ENCODE measurements at regions of chr11 and their contacts with region 1.

Region 1: DNA sequence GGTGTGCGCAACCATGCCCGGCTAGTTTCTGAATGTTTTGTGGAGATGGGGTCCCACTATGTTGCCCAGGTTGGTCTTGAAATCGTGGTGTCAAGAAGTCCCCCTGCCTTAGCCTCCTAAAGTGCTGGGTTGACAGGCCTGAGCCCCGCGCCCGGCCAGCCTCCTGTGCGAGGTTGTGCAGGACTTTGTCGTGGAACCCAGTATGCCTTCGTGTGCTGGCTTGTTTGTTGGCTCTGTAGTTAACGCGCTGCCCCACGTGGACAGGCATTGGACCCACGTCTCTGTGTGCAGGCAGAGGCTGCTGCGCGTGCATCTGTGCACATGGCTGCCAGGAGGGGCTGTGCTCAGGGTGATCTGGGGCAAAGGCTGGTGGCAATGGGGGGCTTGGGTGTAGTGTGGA is 33.9 kb upstream of the ZNF195 start:
- DNase-seq: no peak
- ATAC-seq: no peak
- H3K4me3 ChIP-seq: no peak overlapping the region
- H3K4me3 Mint-ChIP-seq: no peak overlapping the region
- H3K27ac ChIP-seq: no peak overlapping the region
- H3K27ac Mint-ChIP-seq: no peak overlapping the region
- H3K4me1 ChIP-seq: no peaks in the 10 kb centered on the region
- H3K4me1 Mint-ChIP-seq: peaks cover 0 to 10% of the 10 kb centered on the region in 2 donors
- H3K27me3 ChIP-seq: no peaks in the 10 kb centered on the region
- H3K27me3 Mint-ChIP-seq: peaks cover 0 to 3% of the 10 kb centered on the region in 2 donors
- CTCF ChIP-seq: no peak

Region 2: DNA sequence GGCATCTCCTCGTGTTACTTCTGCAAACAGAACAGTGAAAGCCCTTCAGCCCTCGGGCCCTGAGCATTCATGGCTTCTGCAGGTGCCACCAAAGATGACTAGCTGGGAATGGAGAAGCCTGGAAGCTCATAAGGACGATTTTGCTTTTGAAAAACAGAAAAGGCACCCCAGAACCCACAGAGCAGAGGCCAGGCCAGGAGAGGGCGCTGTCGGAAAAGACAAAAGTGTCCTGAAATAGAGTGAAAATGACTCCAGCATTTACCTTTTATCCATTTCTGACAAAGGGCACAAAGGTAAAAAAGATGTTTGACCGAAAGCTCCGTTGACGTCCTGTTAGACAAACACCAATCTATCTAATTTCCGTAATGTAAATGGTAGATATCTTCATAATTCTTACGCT is 71.5 kb before region 1 on chr11:
- intact Hi-C with region 1: loop called (anchors 10 kb)
- DNase-seq: peak; percentile 49 to 78
- ATAC-seq: peak in 1 of 3 donors; percentile 45
- H3K4me3 ChIP-seq: no peak overlapping the region
- H3K4me3 Mint-ChIP-seq: no peak overlapping the region
- H3K27ac ChIP-seq: no peak overlapping the region
- H3K27ac Mint-ChIP-seq: no peak overlapping the region
- H3K4me1 ChIP-seq: no peaks in the 10 kb centered on the region
- H3K4me1 Mint-ChIP-seq: no peaks in the 10 kb centered on the region
- H3K27me3 ChIP-seq: peaks cover 10% of the 10 kb centered on the region
- H3K27me3 Mint-ChIP-seq: peaks cover 34 to 49% of the 10 kb centered on the region in 2 donors
- CTCF ChIP-seq: peak; percentile 76

Region 3: GRCh38 chr11:3378426-3379423 is 34.1 kb before region 1 on chr11 and contains the start of gene ZNF195:
- intact Hi-C with region 1: no loop called
- DNase-seq: peak; percentile 97 to 99
- ATAC-seq: peak; percentile 99 to 100 (median 100)
- H3K4me3 ChIP-seq: peak within 1 kb of the TSS; percentile 56
- H3K4me3 Mint-ChIP-seq: peak within 1 kb of the TSS; percentile 98
- H3K27ac ChIP-seq: peak within 1 kb of the TSS; percentile 76
- H3K27ac Mint-ChIP-seq: peak within 1 kb of the TSS; percentile 89 to 94
- H3K4me1 ChIP-seq: peaks cover 21% of the 10 kb centered on the region
- H3K4me1 Mint-ChIP-seq: peaks cover 45 to 49% of the 10 kb centered on the region in 2 donors
- H3K27me3 ChIP-seq: no peaks in the 10 kb centered on the region
- H3K27me3 Mint-ChIP-seq: no peaks in the 10 kb centered on the region
- CTCF ChIP-seq: no peak
- total RNA-seq, gene ZNF195: 24.7 to 44.1 (median 25.9) TPM